Activated CD4-positive, alpha-beta memory T cell treated with anti-CD3 and anti-CD28 coated beads for 36 hours (primary cell): ENCODE measurements at regions of chr3 and their contacts with region 1.

Region 1: DNA sequence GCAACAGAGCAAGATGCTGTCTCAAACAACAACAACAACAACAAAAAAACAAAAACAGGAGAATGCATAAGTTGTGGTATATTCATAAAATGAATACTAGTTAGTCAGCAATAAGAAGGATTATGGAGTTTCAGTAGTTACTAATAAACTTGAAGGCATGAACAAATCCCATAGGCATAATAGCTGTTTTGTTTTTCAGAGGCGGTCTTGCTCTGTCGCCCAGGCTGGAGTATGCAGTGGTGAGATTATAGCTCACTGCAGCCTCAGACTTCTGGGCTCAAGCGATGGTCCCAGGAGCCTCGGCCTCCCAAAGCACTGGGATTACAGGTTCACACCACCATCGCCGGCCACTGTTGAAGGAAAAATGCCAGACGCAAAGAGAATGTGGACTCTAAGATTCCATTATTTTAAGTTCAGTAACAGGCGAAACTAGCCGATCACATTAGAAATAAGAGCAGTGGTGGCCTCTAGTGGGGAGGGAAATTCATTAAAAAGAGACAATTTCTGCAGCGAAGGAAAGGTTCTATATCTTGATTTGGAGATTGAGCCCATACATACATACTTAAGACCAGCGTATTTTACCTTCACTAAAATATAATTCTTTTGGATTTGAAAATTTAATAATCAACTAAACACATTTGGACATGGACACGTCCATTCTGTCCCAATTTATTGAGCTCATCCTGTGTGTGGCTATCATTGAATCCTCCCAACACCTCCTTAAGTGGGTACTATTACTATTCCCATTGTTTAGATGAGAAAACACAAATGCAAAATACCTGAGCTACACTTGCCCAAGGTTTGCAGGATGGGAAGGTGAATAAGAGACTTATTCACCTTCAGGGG is 27.4 kb upstream of the HDAC11 start:
- DNase-seq: peak; percentile 37
- H3K4me3 Mint-ChIP-seq: peak overlapping the region; percentile 80
- H3K27ac Mint-ChIP-seq: peak overlapping the region; percentile 88
- H3K4me1 Mint-ChIP-seq: peaks cover 16% of the 10 kb centered on the region
- H3K27me3 Mint-ChIP-seq: no peaks in the 10 kb centered on the region

Region 2: GRCh38 chr3:13245615-13245978 is 207.1 kb before region 1 on chr3:
- CTCF ChIA-PET with region 1: no interaction called
- POLR2A ChIA-PET with region 1: no interaction called
- intact Hi-C with region 1: no loop called
- DNase-seq: no peak
- H3K4me3 Mint-ChIP-seq: no peak overlapping the region
- H3K27ac Mint-ChIP-seq: no peak overlapping the region
- H3K4me1 Mint-ChIP-seq: no peaks in the 10 kb centered on the region
- H3K27me3 Mint-ChIP-seq: peaks cover 1% of the 10 kb centered on the region

Region 3: GRCh38 chr3:13308380-13308801 is 144.3 kb before region 1 on chr3:
- CTCF ChIA-PET with region 1: interaction called, 19 read pairs
- POLR2A ChIA-PET with region 1: no interaction called
- intact Hi-C with region 1: loop called (anchors 5 kb)
- DNase-seq: peak; percentile 41
- H3K4me3 Mint-ChIP-seq: no peak overlapping the region
- H3K27ac Mint-ChIP-seq: no peak overlapping the region
- H3K4me1 Mint-ChIP-seq: peaks cover 4% of the 10 kb centered on the region
- H3K27me3 Mint-ChIP-seq: no peaks in the 10 kb centered on the region

Region 4: GRCh38 chr3:13353936-13354542 is 98.7 kb before region 1 on chr3:
- CTCF ChIA-PET with region 1: interaction called, 31 read pairs
- POLR2A ChIA-PET with region 1: no interaction called
- intact Hi-C with region 1: no loop called
- DNase-seq: no peak
- H3K4me3 Mint-ChIP-seq: no peak overlapping the region
- H3K27ac Mint-ChIP-seq: peak overlapping the region; percentile 74
- H3K4me1 Mint-ChIP-seq: peaks cover 42% of the 10 kb centered on the region
- H3K27me3 Mint-ChIP-seq: no peaks in the 10 kb centered on the region

Region 5: GRCh38 chr3:13397316-13397715 is 55.4 kb before region 1 on chr3:
- CTCF ChIA-PET with region 1: interaction called, 46 read pairs
- POLR2A ChIA-PET with region 1: no interaction called
- intact Hi-C with region 1: no loop called
- DNase-seq: no peak
- H3K4me3 Mint-ChIP-seq: no peak overlapping the region
- H3K27ac Mint-ChIP-seq: no peak overlapping the region
- H3K4me1 Mint-ChIP-seq: peaks cover 9% of the 10 kb centered on the region
- H3K27me3 Mint-ChIP-seq: no peaks in the 10 kb centered on the region

Region 6: GRCh38 chr3:13414040-13414729 is 38.5 kb before region 1 on chr3:
- CTCF ChIA-PET with region 1: interaction called, 105 read pairs
- POLR2A ChIA-PET with region 1: interaction called, 27 read pairs
- intact Hi-C with region 1: loop called (anchors 1 kb)
- DNase-seq: peak; percentile 85
- H3K4me3 Mint-ChIP-seq: peak overlapping the region; percentile 67
- H3K27ac Mint-ChIP-seq: peak overlapping the region; percentile 90
- H3K4me1 Mint-ChIP-seq: peaks cover 54% of the 10 kb centered on the region
- H3K27me3 Mint-ChIP-seq: no peaks in the 10 kb centered on the region

Region 7: GRCh38 chr3:13427662-13428603 is 24.8 kb before region 1 on chr3:
- CTCF ChIA-PET with region 1: interaction called, 22 read pairs
- POLR2A ChIA-PET with region 1: interaction called, 3 read pairs
- intact Hi-C with region 1: no loop called
- DNase-seq: peak; percentile 44
- H3K4me3 Mint-ChIP-seq: peak overlapping the region; percentile 14
- H3K27ac Mint-ChIP-seq: peak overlapping the region; percentile 94
- H3K4me1 Mint-ChIP-seq: peaks cover 38% of the 10 kb centered on the region
- H3K27me3 Mint-ChIP-seq: no peaks in the 10 kb centered on the region

Region 8: GRCh38 chr3:13479581-13480339 is 27.0 kb after region 1 on chr3 and contains the start of gene HDAC11:
- CTCF ChIA-PET with region 1: interaction called, 41 read pairs
- POLR2A ChIA-PET with region 1: interaction called, 4 read pairs
- intact Hi-C with region 1: loop called (anchors 1 kb)
- DNase-seq: peak; percentile 98
- H3K4me3 Mint-ChIP-seq: peak within 1 kb of the TSS; percentile 89
- H3K27ac Mint-ChIP-seq: peak within 1 kb of the TSS; percentile 74
- H3K4me1 Mint-ChIP-seq: peaks cover 16% of the 10 kb centered on the region
- H3K27me3 Mint-ChIP-seq: no peaks in the 10 kb centered on the region
- total RNA-seq, gene HDAC11: 3.3 to 4.3 TPM